ENCODE measurements at regions of chr7 and their contacts with region 1.

Region 1: DNA sequence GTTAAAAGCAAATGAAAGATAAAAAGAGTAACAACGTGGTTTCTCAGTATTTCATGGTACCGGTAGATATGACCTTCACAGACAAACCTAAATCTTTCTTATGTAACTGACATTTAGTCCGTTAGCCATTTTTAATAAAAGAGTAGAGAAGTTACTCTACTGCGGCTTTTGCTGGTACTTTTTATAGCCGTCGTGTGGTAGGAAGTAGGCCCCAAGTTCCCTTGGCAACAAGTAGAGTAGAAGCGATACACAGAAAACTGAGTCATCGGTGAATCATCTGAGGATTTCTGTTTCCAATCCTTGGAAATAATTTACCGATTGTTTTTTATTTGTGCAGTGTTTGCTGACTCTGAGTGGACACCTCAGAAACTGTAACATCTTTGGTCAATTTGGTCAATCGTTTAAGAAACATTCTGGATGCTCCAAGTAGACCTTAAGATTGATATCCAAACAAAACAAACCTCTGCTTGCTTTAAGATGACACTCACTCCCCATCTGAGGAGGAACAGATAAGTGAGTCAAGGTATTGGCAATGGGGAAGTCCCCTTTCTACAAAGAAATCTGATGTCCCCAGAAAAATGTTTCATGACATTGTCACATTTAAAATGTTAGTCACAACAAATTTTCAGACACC is 63.9 kb upstream of the AHR start:
- DNase-seq: peak; percentile 50 to 90
- ATAC-seq: peak; percentile 80 to 93 (median 91)
- H3K4me3 ChIP-seq: peak overlapping the region; percentile 0
- H3K4me3 Mint-ChIP-seq: peak overlapping the region; percentile 67
- H3K27ac ChIP-seq: peak overlapping the region; percentile 93
- H3K27ac Mint-ChIP-seq: peak overlapping the region; percentile 96 to 98
- H3K4me1 ChIP-seq: peaks cover 12% of the 10 kb centered on the region
- H3K4me1 Mint-ChIP-seq: peaks cover 17 to 30% of the 10 kb centered on the region in 2 donors
- H3K27me3 ChIP-seq: no peaks in the 10 kb centered on the region
- H3K27me3 Mint-ChIP-seq: no peaks in the 10 kb centered on the region
- CTCF ChIP-seq: no peak

Region 2: GRCh38 chr7:16645593-16646471 is 588.7 kb before region 1 on chr7 and contains the starts of genes ANKMY2 and BZW2:
- intact Hi-C with region 1: loop called (anchors 5 kb)
- DNase-seq: peak; percentile 93 to 96
- ATAC-seq: peak; percentile 85 to 97 (median 90)
- H3K4me3 ChIP-seq: peak within 1 kb of the TSS; percentile 76
- H3K4me3 Mint-ChIP-seq: peak within 1 kb of the TSS; percentile 99
- H3K27ac ChIP-seq: peak within 1 kb of the TSS; percentile 92
- H3K27ac Mint-ChIP-seq: peak within 1 kb of the TSS; percentile 94 to 96
- H3K4me1 ChIP-seq: peaks cover 21% of the 10 kb centered on the region
- H3K4me1 Mint-ChIP-seq: peaks cover 60 to 70% of the 10 kb centered on the region in 2 donors
- H3K27me3 ChIP-seq: no peaks in the 10 kb centered on the region
- H3K27me3 Mint-ChIP-seq: no peaks in the 10 kb centered on the region
- CTCF ChIP-seq: no peak
- total RNA-seq, gene ANKMY2: 15.5 to 21.4 (median 19.4) TPM
- total RNA-seq, gene BZW2: 15.3 to 21.0 (median 19.9) TPM

Region 3: GRCh38 chr7:16982640-16983350 is 251.7 kb before region 1 on chr7:
- intact Hi-C with region 1: loop called (anchors 10 kb)
- DNase-seq: peak in 1 of 2 donors; percentile 70
- ATAC-seq: peak; percentile 70 to 78 (median 74)
- H3K4me3 ChIP-seq: no peak overlapping the region
- H3K4me3 Mint-ChIP-seq: peak overlapping the region; percentile 64
- H3K27ac ChIP-seq: no peak overlapping the region
- H3K27ac Mint-ChIP-seq: peak overlapping the region in 1 of 2 donors; percentile 29
- H3K4me1 ChIP-seq: no peaks in the 10 kb centered on the region
- H3K4me1 Mint-ChIP-seq: peaks cover 5 to 7% of the 10 kb centered on the region in 2 donors
- H3K27me3 ChIP-seq: no peaks in the 10 kb centered on the region
- H3K27me3 Mint-ChIP-seq: peaks cover 8 to 11% of the 10 kb centered on the region in 2 donors
- CTCF ChIP-seq: peak; percentile 97

Region 4: DNA sequence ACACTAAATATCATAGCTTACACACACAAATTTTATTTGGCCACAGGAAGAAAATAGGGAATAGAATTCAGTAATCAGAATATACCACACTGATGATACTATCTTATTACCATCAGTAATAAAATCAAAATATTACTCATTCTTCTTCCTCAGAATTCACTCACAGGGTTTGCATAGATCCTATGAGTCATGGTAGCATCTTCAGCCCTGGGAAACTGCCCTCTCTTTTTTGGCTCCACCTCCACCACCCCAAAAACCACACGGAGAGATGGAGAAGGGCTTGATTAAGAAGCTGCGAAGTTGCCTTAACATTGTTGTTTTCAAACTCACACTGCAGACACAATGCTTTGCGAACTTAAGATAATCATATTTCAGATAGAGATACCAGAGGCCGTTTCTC is 90.2 kb before region 1 on chr7:
- intact Hi-C with region 1: loop called (anchors 2 kb)
- DNase-seq: peak; percentile 20 to 63
- ATAC-seq: peak; percentile 77 to 89 (median 79)
- H3K4me3 ChIP-seq: no peak overlapping the region
- H3K4me3 Mint-ChIP-seq: peak overlapping the region; percentile 21
- H3K27ac ChIP-seq: no peak overlapping the region
- H3K27ac Mint-ChIP-seq: peak overlapping the region; percentile 61 to 80
- H3K4me1 ChIP-seq: peaks cover 4% of the 10 kb centered on the region
- H3K4me1 Mint-ChIP-seq: peaks cover 24 to 29% of the 10 kb centered on the region in 2 donors
- H3K27me3 ChIP-seq: no peaks in the 10 kb centered on the region
- H3K27me3 Mint-ChIP-seq: no peaks in the 10 kb centered on the region
- CTCF ChIP-seq: no peak

Region 5: DNA sequence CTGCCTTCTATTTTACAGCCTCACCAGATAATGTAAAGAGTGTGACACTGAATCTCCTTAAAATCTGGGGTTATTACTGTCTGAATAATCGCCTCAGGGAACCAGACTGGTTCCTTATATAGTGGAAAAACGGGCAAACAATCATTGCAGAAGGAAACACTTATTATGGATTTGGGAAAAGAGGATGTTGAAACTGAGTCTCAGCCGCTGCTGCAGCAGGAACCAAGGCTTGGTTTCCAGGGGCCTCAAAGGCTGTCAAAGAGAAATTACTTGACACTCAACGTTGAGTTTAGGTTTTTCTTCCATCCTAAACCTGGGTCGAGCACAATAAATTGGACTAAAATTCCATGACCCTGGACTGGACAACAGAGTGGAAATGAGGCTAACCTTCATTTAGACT is 39.9 kb before region 1 on chr7:
- intact Hi-C with region 1: loop called (anchors 5 kb)
- DNase-seq: no peak
- ATAC-seq: no peak
- H3K4me3 ChIP-seq: no peak overlapping the region
- H3K4me3 Mint-ChIP-seq: no peak overlapping the region
- H3K27ac ChIP-seq: no peak overlapping the region
- H3K27ac Mint-ChIP-seq: no peak overlapping the region
- H3K4me1 ChIP-seq: no peaks in the 10 kb centered on the region
- H3K4me1 Mint-ChIP-seq: peaks cover 4% of the 10 kb centered on the region in 2 donors
- H3K27me3 ChIP-seq: no peaks in the 10 kb centered on the region
- H3K27me3 Mint-ChIP-seq: peaks cover 0 to 2% of the 10 kb centered on the region in 2 donors
- CTCF ChIP-seq: no peak

Region 6: GRCh38 chr7:17274551-17275245 is 40.2 kb after region 1 on chr7:
- intact Hi-C with region 1: loop called (anchors 5 kb)
- DNase-seq: no peak
- ATAC-seq: peak in 2 of 3 donors; percentile 48 to 59
- H3K4me3 ChIP-seq: no peak overlapping the region
- H3K4me3 Mint-ChIP-seq: no peak overlapping the region
- H3K27ac ChIP-seq: no peak overlapping the region
- H3K27ac Mint-ChIP-seq: no peak overlapping the region
- H3K4me1 ChIP-seq: no peaks in the 10 kb centered on the region
- H3K4me1 Mint-ChIP-seq: peaks cover 13 to 16% of the 10 kb centered on the region in 2 donors
- H3K27me3 ChIP-seq: no peaks in the 10 kb centered on the region
- H3K27me3 Mint-ChIP-seq: no peaks in the 10 kb centered on the region
- CTCF ChIP-seq: no peak

Region 7: GRCh38 chr7:17298207-17298839 is 63.8 kb after region 1 on chr7 and contains the start of gene AHR:
- intact Hi-C with region 1: loop called (anchors 1 kb)
- DNase-seq: peak; percentile 66 to 95
- ATAC-seq: peak; percentile 76 to 86 (median 76)
- H3K4me3 ChIP-seq: peak within 1 kb of the TSS; percentile 76
- H3K4me3 Mint-ChIP-seq: peak within 1 kb of the TSS; percentile 92
- H3K27ac ChIP-seq: peak within 1 kb of the TSS; percentile 79
- H3K27ac Mint-ChIP-seq: peak within 1 kb of the TSS; percentile 70 to 88
- H3K4me1 ChIP-seq: no peaks in the 10 kb centered on the region
- H3K4me1 Mint-ChIP-seq: peaks cover 27% of the 10 kb centered on the region in 2 donors
- H3K27me3 ChIP-seq: no peaks in the 10 kb centered on the region
- H3K27me3 Mint-ChIP-seq: no peaks in the 10 kb centered on the region
- CTCF ChIP-seq: no peak
- total RNA-seq, gene AHR: 20.7 to 54.7 (median 44.9) TPM

Region 8: GRCh38 chr7:17357952-17358351 is 123.4 kb after region 1 on chr7:
- intact Hi-C with region 1: no loop called
- DNase-seq: no peak
- ATAC-seq: no peak
- H3K4me3 ChIP-seq: no peak overlapping the region
- H3K4me3 Mint-ChIP-seq: no peak overlapping the region
- H3K27ac ChIP-seq: no peak overlapping the region
- H3K27ac Mint-ChIP-seq: no peak overlapping the region
- H3K4me1 ChIP-seq: no peaks in the 10 kb centered on the region
- H3K4me1 Mint-ChIP-seq: no peaks in the 10 kb centered on the region
- H3K27me3 ChIP-seq: no peaks in the 10 kb centered on the region
- H3K27me3 Mint-ChIP-seq: no peaks in the 10 kb centered on the region
- CTCF ChIP-seq: no peak